ENCODE measurements at regions of chr11 and their contacts with region 1.

Region 1: GRCh38 chr11:465896-466530 is 15.9 kb downstream of the PTDSS2 start:
- DNase-seq: peak; percentile 52 to 87
- H3K4me3 ChIP-seq: peak overlapping the region; percentile 31; the same call in 1 of the 2 replicates
- H3K27ac ChIP-seq: peak overlapping the region; percentile 60
- H3K4me1 ChIP-seq: peaks cover 20% of the 10 kb centered on the region
- H3K27me3 ChIP-seq: no peaks in the 10 kb centered on the region
- CTCF ChIP-seq: no peak

Region 2: DNA sequence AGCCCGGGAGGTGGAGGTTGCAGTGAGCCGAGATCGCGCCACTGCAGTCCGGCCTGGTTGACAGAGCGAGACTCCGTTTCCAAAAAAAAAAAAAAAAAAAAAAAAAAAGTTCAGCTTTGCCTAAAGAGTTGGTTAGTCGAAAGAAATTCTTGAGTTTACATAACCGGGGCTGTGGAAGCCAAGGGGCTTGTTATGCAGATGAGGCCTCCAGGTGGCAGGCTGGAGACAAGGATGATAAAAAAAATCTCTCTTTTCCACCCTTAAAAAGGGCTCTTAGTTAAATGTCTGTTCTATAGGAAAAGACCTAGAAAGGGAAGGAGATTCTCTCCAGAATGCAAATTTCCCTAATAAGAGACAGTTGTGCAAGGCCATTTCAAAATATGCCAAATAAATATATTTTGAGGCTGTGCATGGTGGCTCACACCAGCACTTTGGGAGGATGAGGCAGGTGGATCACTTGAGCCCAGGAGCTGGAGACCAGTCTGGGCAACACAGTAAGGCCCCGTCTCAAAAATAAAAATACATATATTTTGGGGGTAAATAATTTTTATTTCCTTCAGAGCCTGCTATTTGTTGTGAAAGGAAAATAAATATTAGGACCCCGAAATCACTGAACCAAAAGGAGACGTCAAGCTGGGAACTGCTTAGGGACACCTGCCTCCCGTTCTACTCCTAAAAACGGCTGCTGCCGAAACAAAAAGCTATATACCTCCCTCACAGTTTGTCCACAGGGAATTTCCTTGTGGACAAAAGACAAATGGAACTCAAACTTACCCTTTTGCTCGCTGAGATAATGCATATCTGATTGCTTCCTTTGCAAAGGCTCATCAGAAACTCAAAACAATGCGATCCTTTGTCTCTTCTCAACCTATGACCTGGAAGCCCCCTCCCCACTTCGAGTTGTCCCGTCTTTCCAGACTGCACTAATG is 160.8 kb before region 1 on chr11:
- CTCF ChIA-PET with region 1: no interaction called
- POLR2A ChIA-PET with region 1: interaction called, 17 read pairs
- intact Hi-C with region 1: no loop called
- DNase-seq: peak in 1 of 2 experiments; percentile 54
- H3K4me3 ChIP-seq: no peak overlapping the region
- H3K27ac ChIP-seq: no peak overlapping the region
- H3K4me1 ChIP-seq: peaks cover 10% of the 10 kb centered on the region
- H3K27me3 ChIP-seq: no peaks in the 10 kb centered on the region
- CTCF ChIP-seq: peak; percentile 61

Measured in PC-9 (cell line).